Activated CD8-positive, alpha-beta T cell treated with anti-CD3 and anti-CD28 coated beads, Interleukin-2, amount 10 ng/mL, durations not matched to agents 7 days and 5 days (primary cell): ENCODE measurements at regions of chrX and their contacts with region 1.

Region 1: DNA sequence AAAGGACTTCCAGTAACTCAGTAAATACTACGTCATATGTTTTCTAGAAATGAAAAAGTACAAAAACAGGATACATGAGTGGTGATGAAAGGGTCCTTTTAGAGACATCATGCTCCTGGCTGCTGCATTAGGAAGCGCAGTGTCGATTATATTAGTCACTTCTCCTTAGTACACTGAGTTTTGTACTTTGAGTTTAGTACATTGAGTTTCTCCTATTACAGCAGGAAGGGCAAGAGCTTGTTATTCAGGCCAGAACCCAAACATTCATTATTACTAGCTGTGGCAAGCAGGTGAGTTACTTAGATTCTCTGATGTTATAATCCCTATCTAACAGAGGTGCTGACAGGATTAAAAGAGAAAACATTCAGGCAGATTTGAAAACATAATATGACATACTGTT is 21.3 kb downstream of the RPGR start:
- DNase-seq: no peak
- ATAC-seq: no peak
- H3K4me3 Mint-ChIP-seq: no peak overlapping the region
- H3K27ac Mint-ChIP-seq: no peak overlapping the region
- H3K4me1 Mint-ChIP-seq: no peaks in the 10 kb centered on the region
- H3K27me3 Mint-ChIP-seq: no peaks in the 10 kb centered on the region

Region 2: DNA sequence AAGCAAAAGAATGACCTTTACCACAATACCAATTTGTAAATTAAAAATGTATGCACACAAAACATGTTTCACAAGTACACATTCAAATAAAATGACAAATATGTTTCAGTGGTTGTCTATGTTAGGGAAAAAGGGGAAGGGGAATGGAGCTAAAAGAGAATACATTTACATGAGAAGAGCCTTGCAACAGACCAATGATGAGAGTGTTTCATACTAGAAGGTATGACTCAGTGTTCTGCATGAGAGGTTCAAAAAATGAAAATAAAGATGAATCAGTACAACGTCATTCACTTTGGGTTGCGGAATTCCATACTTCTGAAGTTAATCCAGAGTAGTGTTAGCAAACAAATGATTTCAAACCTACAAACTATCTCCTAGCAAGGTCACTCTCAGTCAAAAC is 30.4 kb before region 1 on chrX:
- CTCF ChIA-PET with region 1: no interaction called
- POLR2A ChIA-PET with region 1: no interaction called
- DNase-seq: no peak
- ATAC-seq: no peak
- H3K4me3 Mint-ChIP-seq: no peak overlapping the region
- H3K27ac Mint-ChIP-seq: no peak overlapping the region
- H3K4me1 Mint-ChIP-seq: peaks cover 8% of the 10 kb centered on the region
- H3K27me3 Mint-ChIP-seq: no peaks in the 10 kb centered on the region

Region 3: GRCh38 chrX:38327007-38327774 is 21.2 kb after region 1 on chrX and contains the start of gene RPGR:
- CTCF ChIA-PET with region 1: interaction called, 10 read pairs
- POLR2A ChIA-PET with region 1: interaction called, 6 read pairs
- DNase-seq: peak; percentile 94
- ATAC-seq: peak; percentile 97
- H3K4me3 Mint-ChIP-seq: peak within 1 kb of the TSS; percentile 86
- H3K27ac Mint-ChIP-seq: peak within 1 kb of the TSS; percentile 92
- H3K4me1 Mint-ChIP-seq: peaks cover 26% of the 10 kb centered on the region
- H3K27me3 Mint-ChIP-seq: no peaks in the 10 kb centered on the region
- total RNA-seq, gene RPGR: 5.0 to 7.6 TPM

Region 4: GRCh38 chrX:38341442-38341841 is 35.5 kb after region 1 on chrX:
- CTCF ChIA-PET with region 1: no interaction called
- POLR2A ChIA-PET with region 1: no interaction called
- DNase-seq: no peak
- ATAC-seq: no peak
- H3K4me3 Mint-ChIP-seq: no peak overlapping the region
- H3K27ac Mint-ChIP-seq: no peak overlapping the region
- H3K4me1 Mint-ChIP-seq: no peaks in the 10 kb centered on the region
- H3K27me3 Mint-ChIP-seq: peaks cover 5% of the 10 kb centered on the region